Activated CD8-positive, alpha-beta T cell treated with anti-CD3 and anti-CD28 coated beads for 36 hours (primary cell): ENCODE measurements at regions of chr3 and their contacts with region 1.

Region 1: GRCh38 chr3:30693470-30694120 is 87.2 kb downstream of the TGFBR2 start:
- DNase-seq: peak; percentile 55
- ATAC-seq: peak; percentile 88
- H3K4me3 Mint-ChIP-seq: no peak overlapping the region
- H3K27ac Mint-ChIP-seq: peak overlapping the region; percentile 82
- H3K4me1 Mint-ChIP-seq: peaks cover 76% of the 10 kb centered on the region
- H3K27me3 Mint-ChIP-seq: no peaks in the 10 kb centered on the region
- CTCF ChIP-seq: peak; percentile 84

Region 2: DNA sequence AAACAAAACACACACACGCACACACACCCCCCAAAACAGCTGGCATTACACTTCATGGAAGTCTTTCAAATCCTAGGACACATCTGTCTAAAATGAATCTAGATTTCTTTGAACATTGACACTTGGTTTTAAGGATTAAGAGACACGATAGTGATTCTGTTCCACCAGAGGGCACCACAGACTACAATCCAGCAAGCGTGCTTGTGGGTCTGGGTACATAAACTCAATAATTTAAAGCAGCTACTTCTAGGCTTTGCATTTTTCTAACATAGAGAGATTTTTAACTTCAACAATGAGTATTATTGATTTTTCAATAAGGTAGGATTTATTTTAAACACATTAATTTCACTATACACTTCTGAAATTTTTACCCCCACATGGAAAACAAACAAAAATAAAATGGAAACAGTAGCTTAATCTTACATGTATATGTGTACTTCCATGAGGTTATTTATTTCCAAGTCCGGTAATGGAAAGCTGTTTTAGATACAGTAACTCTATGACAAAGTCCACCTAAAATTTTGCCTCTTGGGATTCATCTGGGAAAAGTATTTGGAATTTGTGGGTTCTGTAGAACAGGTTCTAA is 651.2 kb before region 1 on chr3:
- CTCF ChIA-PET with region 1: interaction called, 10 read pairs
- POLR2A ChIA-PET with region 1: no interaction called
- intact Hi-C with region 1: no loop called
- DNase-seq: peak; percentile 78
- ATAC-seq: no peak
- H3K4me3 Mint-ChIP-seq: no peak overlapping the region
- H3K27ac Mint-ChIP-seq: no peak overlapping the region
- H3K4me1 Mint-ChIP-seq: no peaks in the 10 kb centered on the region
- H3K27me3 Mint-ChIP-seq: peaks cover 28% of the 10 kb centered on the region
- CTCF ChIP-seq: peak; percentile 66

Region 3: DNA sequence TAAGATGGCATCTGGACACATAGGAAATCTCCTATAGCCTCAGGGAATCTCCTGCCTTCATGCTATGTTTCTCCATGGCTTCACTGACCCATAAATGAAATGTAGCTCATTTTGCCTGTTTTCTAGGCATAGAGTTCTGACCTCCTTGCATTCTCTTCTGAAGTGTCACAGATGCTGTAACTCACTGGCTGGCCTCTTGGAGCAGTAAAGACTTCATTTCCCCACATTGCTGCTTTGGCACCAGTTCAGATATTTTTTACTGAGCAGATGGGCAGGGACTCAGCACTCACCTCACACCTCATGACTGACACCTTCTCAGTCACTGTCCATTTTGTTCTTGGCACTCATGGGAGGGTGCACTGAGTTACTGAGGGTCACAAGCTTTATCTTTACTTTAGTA is 373.9 kb before region 1 on chr3:
- CTCF ChIA-PET with region 1: interaction called, 13 read pairs
- POLR2A ChIA-PET with region 1: no interaction called
- intact Hi-C with region 1: no loop called
- DNase-seq: peak; percentile 60
- ATAC-seq: peak; percentile 99
- H3K4me3 Mint-ChIP-seq: no peak overlapping the region
- H3K27ac Mint-ChIP-seq: no peak overlapping the region
- H3K4me1 Mint-ChIP-seq: peaks cover 14% of the 10 kb centered on the region
- H3K27me3 Mint-ChIP-seq: no peaks in the 10 kb centered on the region
- CTCF ChIP-seq: peak; percentile 61

Region 4: DNA sequence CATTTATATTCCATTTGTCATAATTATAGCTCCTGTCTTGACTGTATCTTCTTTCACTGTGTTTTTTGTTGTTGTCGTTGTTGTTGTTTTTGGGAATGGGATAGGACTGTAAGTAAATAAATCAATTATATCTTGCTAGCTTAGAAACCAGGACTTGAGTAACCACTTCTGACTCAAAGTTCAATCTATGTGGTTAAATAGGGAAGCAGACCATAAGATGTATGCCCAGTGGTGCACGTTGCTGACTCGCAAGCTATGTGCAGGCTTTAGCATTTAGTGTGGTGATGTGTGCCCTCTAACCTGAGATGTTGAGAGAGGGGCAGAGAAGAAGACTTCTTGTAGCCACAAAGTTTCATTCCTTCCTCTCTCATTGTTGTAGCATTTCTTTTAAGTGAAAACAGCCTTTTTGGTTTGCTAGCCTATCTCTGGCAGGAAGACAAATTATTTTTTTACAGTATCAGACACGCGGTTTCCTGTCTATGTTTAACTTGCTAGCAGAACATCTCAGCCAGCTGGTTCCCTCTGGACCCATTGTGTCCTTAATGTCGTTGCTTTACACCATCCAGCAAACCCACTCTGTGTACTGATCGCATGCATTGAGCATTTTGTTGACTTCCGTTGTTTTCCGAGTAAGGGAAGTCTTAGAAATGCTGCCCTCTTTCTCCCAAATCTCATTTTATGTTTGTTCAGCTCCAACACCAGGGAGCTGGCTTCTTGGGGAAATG is 35.1 kb before region 1 on chr3:
- CTCF ChIA-PET with region 1: interaction called, 22 read pairs
- POLR2A ChIA-PET with region 1: interaction called, 5 read pairs
- intact Hi-C with region 1: loop called (anchors 5 kb)
- DNase-seq: peak; percentile 80
- ATAC-seq: peak; percentile 74
- H3K4me3 Mint-ChIP-seq: peak overlapping the region; percentile 65
- H3K27ac Mint-ChIP-seq: peak overlapping the region; percentile 98
- H3K4me1 Mint-ChIP-seq: peaks cover 100% of the 10 kb centered on the region
- H3K27me3 Mint-ChIP-seq: no peaks in the 10 kb centered on the region
- CTCF ChIP-seq: no peak

Region 5: GRCh38 chr3:30681643-30682211 is 11.9 kb before region 1 on chr3:
- CTCF ChIA-PET with region 1: interaction called, 40 read pairs
- POLR2A ChIA-PET with region 1: interaction called, 4 read pairs
- intact Hi-C with region 1: no loop called
- DNase-seq: no peak
- ATAC-seq: peak; percentile 34
- H3K4me3 Mint-ChIP-seq: peak overlapping the region; percentile 0
- H3K27ac Mint-ChIP-seq: peak overlapping the region; percentile 84
- H3K4me1 Mint-ChIP-seq: peaks cover 88% of the 10 kb centered on the region
- H3K27me3 Mint-ChIP-seq: no peaks in the 10 kb centered on the region
- CTCF ChIP-seq: no peak

Region 6: GRCh38 chr3:30751610-30752299 is 58.2 kb after region 1 on chr3:
- CTCF ChIA-PET with region 1: interaction called, 30 read pairs
- POLR2A ChIA-PET with region 1: interaction called, 3 read pairs
- intact Hi-C with region 1: no loop called
- DNase-seq: peak; percentile 83
- ATAC-seq: peak; percentile 69
- H3K4me3 Mint-ChIP-seq: no peak overlapping the region
- H3K27ac Mint-ChIP-seq: peak overlapping the region; percentile 44
- H3K4me1 Mint-ChIP-seq: peaks cover 44% of the 10 kb centered on the region
- H3K27me3 Mint-ChIP-seq: peaks cover 2% of the 10 kb centered on the region
- CTCF ChIP-seq: peak; percentile 75

Region 7: DNA sequence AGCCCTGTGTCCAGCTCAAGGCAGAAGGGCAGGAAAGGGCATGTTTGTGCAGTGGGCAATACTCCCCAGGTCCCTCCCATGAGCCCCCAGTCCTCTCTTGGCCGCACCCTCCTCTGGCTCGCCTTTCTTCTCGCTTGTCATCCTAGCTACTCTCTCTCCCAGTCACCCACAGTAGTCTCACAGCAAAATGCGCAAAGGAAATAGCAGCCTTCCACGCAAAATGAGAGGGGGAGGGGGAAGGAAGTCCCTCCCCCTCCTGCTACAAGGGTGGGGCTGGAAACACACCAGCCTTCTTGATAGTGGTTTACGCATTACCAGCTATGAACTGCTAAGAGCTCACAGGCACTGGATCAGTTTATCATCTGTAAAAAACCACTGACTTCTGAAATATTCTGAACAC is 117.0 kb after region 1 on chr3:
- CTCF ChIA-PET with region 1: no interaction called
- POLR2A ChIA-PET with region 1: no interaction called
- intact Hi-C with region 1: no loop called
- DNase-seq: no peak
- ATAC-seq: no peak
- H3K4me3 Mint-ChIP-seq: no peak overlapping the region
- H3K27ac Mint-ChIP-seq: no peak overlapping the region
- H3K4me1 Mint-ChIP-seq: no peaks in the 10 kb centered on the region
- H3K27me3 Mint-ChIP-seq: peaks cover 6% of the 10 kb centered on the region
- CTCF ChIP-seq: no peak